Transverse colon (tissue), 4 donors: ENCODE measurements at regions of chr9 and their contacts with region 1.

Region 1: GRCh38 chr9:70258692-70259511 is at the start of gene SMC5:
- DNase-seq: peak; percentile 93
- H3K4me3 ChIP-seq: peak within 1 kb of the TSS; percentile 72 to 85 (median 81)
- H3K27ac ChIP-seq: peak within 1 kb of the TSS; percentile 96 to 99 (median 96)
- H3K4me1 ChIP-seq: peaks cover 11 to 68% (median 52%) of the 10 kb centered on the region in 4 donors
- H3K27me3 ChIP-seq: no peaks in the 10 kb centered on the region
- CTCF ChIP-seq: peak in 1 of 5 experiments; percentile 3
- EP300 ChIP-seq: no peak
- POLR2A ChIP-seq: peak; percentile 97
- total RNA-seq, gene SMC5: 20.2 to 86.1 (median 24.0) TPM

Region 2: DNA sequence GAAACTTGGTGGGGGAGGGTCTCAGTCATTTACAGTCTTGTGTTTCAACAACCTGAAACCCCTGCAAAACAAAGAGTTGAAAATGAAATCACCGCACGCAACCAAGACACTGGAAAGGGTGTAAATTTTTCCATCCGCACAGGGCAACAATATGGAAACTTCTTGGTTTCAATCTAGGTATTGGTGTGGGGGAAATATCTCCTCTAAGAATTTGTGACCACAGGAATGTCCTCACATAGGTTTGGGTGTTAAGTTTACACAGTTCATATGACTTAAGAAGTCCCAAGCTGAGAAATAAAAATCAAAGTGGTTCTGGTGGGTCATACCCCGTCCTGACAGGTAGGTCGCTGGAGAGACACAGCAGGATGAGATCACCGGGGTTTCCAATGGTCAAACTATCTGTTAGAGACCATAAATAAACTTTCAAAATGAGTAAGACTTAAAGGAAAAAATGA is 1605.7 kb before region 1 on chr9:
- in situ Hi-C with region 1: no loop called
- intact Hi-C with region 1: loop called (anchors 5 kb)
- DNase-seq: no peak
- H3K4me3 ChIP-seq: no peak overlapping the region
- H3K27ac ChIP-seq: no peak overlapping the region
- H3K4me1 ChIP-seq: peaks cover 3 to 18% (median 4%) of the 10 kb centered on the region in 4 donors
- H3K27me3 ChIP-seq: no peaks in the 10 kb centered on the region
- CTCF ChIP-seq: no peak
- EP300 ChIP-seq: no peak
- POLR2A ChIP-seq: no peak